Colonic mucosa (tissue), 4 donors: ENCODE measurements at regions of chr7 and their contacts with region 1.

Region 1: DNA sequence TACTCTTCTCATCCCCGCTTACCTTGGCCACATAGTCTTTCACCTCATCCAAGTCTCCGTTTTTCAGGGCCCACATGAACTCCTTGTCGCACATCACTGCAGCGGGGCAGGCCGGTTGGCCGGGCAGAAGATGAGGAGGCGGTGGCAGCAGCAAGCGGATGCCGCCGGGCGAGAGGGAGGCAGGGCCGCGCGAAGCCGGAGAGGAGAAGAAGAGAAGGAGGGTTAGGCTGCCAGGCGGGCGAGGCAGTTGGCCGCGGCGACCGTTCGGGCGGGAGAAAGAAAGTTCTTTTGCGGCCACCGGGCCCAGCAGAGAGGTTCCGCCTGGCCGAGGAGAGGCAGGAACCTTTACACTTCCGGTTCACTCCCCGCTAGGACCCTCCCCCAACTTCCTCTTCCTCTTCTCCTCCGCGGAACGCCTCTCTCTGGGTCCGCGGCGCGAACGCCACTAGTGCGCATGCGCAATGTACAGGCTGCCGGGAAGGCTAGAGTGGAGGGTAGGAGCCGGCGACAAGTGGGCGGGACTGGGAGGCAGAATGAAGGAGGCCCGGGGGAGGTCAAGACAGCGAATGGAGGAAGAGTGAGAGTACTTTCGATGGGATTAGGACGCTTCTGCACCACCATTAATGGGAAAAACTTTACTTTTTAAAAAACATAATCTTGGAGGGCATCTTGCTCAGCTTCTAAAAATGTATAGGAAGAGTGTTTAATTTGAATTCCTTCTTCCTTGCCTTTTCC is at the start of gene MTPN:
- DNase-seq: peak; percentile 99
- H3K4me3 ChIP-seq: peak within 1 kb of the TSS; percentile 91
- H3K27ac ChIP-seq: peak within 1 kb of the TSS; percentile 83
- H3K4me1 ChIP-seq: no peaks in the 10 kb centered on the region
- H3K27me3 ChIP-seq: no peaks in the 10 kb centered on the region
- CTCF ChIP-seq: no peak
- total RNA-seq, gene MTPN: 101 to 109 TPM

Region 2: DNA sequence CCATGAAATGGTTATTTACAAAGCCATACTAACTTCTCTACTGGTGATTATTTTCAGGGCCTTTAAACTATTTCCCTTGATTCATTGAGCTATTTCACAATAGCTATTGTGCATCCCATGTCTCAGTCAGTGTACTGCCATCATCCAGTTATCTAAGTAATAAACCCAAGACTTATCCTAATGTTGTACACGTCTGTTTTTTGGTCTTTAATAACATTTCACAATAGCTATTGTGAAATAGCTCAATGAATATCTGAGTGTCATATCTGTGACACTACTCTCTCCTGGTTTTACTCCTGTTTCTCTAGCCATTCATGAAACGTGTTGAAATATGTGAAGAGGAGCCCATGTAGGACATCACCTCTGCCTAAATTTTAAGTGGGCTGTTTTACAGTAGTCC is 865.8 kb before region 1 on chr7:
- intact Hi-C with region 1: no loop called
- DNase-seq: no peak
- H3K4me3 ChIP-seq: no peak overlapping the region
- H3K27ac ChIP-seq: no peak overlapping the region
- H3K4me1 ChIP-seq: no peaks in the 10 kb centered on the region
- H3K27me3 ChIP-seq: no peaks in the 10 kb centered on the region
- CTCF ChIP-seq: no peak

Region 3: GRCh38 chr7:135662373-135663114 is 314.6 kb before region 1 on chr7 and contains the start of gene STMP1:
- intact Hi-C with region 1: loop called (anchors 10 kb)
- DNase-seq: peak; percentile 96
- H3K4me3 ChIP-seq: peak within 1 kb of the TSS; percentile 49
- H3K27ac ChIP-seq: peak within 1 kb of the TSS; percentile 69
- H3K4me1 ChIP-seq: no peaks in the 10 kb centered on the region
- H3K27me3 ChIP-seq: no peaks in the 10 kb centered on the region
- CTCF ChIP-seq: no peak
- total RNA-seq, gene STMP1: 25.7 to 27.4 TPM

Region 4: GRCh38 chr7:135886345-135887132 is 90.6 kb before region 1 on chr7:
- intact Hi-C with region 1: no loop called
- DNase-seq: no peak
- H3K4me3 ChIP-seq: no peak overlapping the region
- H3K27ac ChIP-seq: no peak overlapping the region
- H3K4me1 ChIP-seq: no peaks in the 10 kb centered on the region
- H3K27me3 ChIP-seq: no peaks in the 10 kb centered on the region
- CTCF ChIP-seq: no peak